BJ (cell line): ENCODE measurements at regions of chr10 and their contacts with region 1.

Region 1: GRCh38 chr10:77710759-77711682 is 73.4 kb upstream of the KCNMA1 start:
- DNase-seq: no peak
- H3K4me3 ChIP-seq: peak overlapping the region; percentile 38
- H3K27me3 ChIP-seq: no peaks in the 10 kb centered on the region
- CTCF ChIP-seq: peak; percentile 99

Region 2: DNA sequence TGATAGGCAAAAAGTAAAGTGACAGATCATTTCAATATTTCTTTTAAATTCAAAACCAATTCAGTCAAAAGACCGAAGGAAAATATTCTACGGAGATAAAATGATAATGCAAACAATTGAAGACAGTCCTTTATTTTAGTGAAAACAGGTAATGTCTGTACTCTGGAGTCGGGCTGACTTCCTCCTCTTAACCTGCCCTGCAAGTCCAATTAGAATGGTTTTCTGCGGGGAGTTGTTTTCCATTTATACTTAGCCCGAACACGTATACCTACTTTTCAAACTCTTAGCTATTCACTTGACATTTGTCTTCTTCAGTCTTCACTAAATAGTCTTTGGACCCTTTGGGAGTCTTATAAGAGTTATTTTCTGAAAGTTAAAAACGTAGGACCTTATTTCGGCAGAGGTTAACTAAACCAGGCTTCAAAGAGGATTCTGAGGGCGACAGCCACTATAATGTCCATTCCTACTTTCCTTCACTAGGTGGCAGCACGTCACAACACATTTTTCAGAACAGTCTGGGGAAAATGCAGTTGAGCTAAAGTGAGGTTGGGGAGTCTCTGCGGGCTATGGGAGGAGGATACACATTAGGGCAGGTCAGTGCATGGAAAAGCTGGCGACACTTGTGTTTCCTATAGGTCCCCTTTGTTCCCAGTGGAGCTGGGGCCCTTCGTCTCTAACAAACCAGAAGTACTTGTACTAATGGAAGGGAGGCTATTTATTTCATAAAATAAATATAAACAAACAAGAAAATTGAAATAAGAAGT is 545.4 kb before region 1 on chr10:
- CTCF ChIA-PET with region 1: interaction called, 110 read pairs
- POLR2A ChIA-PET with region 1: no interaction called
- DNase-seq: no peak
- H3K4me3 ChIP-seq: no peak overlapping the region
- H3K27me3 ChIP-seq: no peaks in the 10 kb centered on the region
- CTCF ChIP-seq: peak; percentile 77

Region 3: DNA sequence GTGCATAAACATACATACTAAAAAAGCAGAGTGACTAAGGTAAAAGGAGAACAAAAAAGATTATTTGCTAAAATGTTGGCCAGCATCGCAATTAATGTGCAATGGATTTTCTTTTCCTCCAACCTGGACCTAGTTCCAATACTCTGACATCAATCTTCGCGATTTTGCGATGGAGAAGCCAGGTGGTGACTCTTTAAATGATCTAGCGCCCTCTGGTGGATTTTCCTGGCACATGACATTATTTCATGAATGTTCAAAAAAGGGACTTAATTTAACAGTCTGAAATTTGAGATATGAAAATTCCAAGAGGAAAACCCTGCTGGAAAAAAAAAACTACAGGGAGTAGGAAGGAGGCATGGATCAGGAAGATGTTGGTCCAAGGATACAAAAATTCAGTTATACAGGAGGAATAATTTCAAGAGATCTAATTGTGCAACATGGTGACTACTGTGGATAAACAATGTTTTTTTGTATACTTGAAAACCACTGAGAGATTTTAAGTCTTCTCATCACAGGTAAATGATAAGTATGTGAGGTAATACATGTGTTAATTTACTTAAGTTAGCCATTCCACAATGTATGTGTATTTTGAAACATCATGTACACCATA is 69.1 kb before region 1 on chr10:
- CTCF ChIA-PET with region 1: interaction called, 44 read pairs
- POLR2A ChIA-PET with region 1: no interaction called
- DNase-seq: peak; percentile 27
- H3K4me3 ChIP-seq: no peak overlapping the region
- H3K27me3 ChIP-seq: no peaks in the 10 kb centered on the region; the same call in 1 of the 2 replicates
- CTCF ChIP-seq: peak; percentile 67

Region 4: DNA sequence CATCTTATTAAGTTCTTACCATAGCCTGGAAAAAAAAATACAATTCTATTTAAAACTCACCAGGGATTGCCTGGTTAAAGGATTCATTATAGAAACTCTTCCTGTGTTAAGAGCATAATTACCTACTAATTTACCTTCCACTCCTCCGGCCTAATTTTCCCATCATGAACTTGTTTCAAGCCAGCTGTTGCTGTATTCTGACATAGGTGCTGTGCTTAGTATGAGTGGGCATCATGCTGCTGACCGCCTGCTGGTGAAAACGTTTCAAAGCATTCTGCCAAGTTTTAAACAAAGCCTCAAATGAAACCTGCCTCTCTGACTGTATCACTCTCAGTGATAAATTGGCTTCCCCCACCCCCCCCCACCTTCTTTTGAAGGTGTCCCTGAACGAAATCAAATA is 25.6 kb before region 1 on chr10:
- CTCF ChIA-PET with region 1: interaction called, 155 read pairs
- POLR2A ChIA-PET with region 1: no interaction called
- DNase-seq: no peak
- H3K4me3 ChIP-seq: no peak overlapping the region
- H3K27me3 ChIP-seq: peaks cover 26% of the 10 kb centered on the region
- CTCF ChIP-seq: no peak

Region 5: GRCh38 chr10:77732213-77733003 is 21.4 kb after region 1 on chr10:
- CTCF ChIA-PET with region 1: interaction called, 15 read pairs
- POLR2A ChIA-PET with region 1: no interaction called
- DNase-seq: no peak
- H3K4me3 ChIP-seq: no peak overlapping the region
- H3K27me3 ChIP-seq: no peaks in the 10 kb centered on the region
- CTCF ChIP-seq: no peak

Region 6: GRCh38 chr10:77746047-77746707 is 35.2 kb after region 1 on chr10:
- CTCF ChIA-PET with region 1: interaction called, 10 read pairs
- POLR2A ChIA-PET with region 1: no interaction called
- DNase-seq: no peak
- H3K4me3 ChIP-seq: no peak overlapping the region
- H3K27me3 ChIP-seq: no peaks in the 10 kb centered on the region
- CTCF ChIP-seq: no peak

Region 7: GRCh38 chr10:78408671-78409472 is 697.9 kb after region 1 on chr10:
- CTCF ChIA-PET with region 1: no interaction called
- POLR2A ChIA-PET with region 1: no interaction called
- DNase-seq: no peak
- H3K4me3 ChIP-seq: no peak overlapping the region
- H3K27me3 ChIP-seq: peaks cover 7% of the 10 kb centered on the region
- CTCF ChIP-seq: no peak